ENCODE measurements at regions of chr3 and their contacts with region 1.

Region 1: GRCh38 chr3:32384938-32385337 is 6.7 kb upstream of the CMTM7 start:
- DNase-seq: no peak
- H3K4me3 ChIP-seq: no peak overlapping the region
- H3K27ac ChIP-seq: no peak overlapping the region
- H3K4me1 ChIP-seq: no peaks in the 10 kb centered on the region
- H3K27me3 ChIP-seq: no peaks in the 10 kb centered on the region
- CTCF ChIP-seq: no peak
- POLR2A ChIP-seq: no peak

Region 2: DNA sequence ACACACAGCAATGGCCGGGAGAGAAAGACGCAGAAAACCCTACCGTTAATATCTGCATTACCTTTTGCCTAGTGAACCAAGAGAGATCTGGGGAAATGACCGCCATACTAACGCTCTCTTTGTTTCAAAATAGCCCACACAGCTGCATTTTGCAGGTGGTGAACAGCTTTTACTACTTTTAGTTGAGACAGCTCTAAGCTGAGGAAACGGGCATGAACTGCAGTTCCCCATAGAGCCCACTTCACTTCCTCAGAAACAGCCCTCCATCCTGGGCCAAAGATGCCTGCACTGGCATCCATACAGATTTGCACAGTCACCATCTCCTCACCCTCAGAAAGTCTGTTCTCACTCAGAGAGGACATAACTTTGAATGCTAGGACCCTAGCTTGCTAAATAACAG is 358.3 kb before region 1 on chr3:
- intact Hi-C with region 1: no loop called
- DNase-seq: no peak
- H3K4me3 ChIP-seq: no peak overlapping the region
- H3K27ac ChIP-seq: no peak overlapping the region
- H3K4me1 ChIP-seq: no peaks in the 10 kb centered on the region
- H3K27me3 ChIP-seq: no peaks in the 10 kb centered on the region
- CTCF ChIP-seq: no peak
- POLR2A ChIP-seq: no peak

Region 3: GRCh38 chr3:32919920-32920319 is 535.0 kb after region 1 on chr3:
- intact Hi-C with region 1: loop called (anchors 5 kb)
- DNase-seq: no peak
- H3K4me3 ChIP-seq: no peak overlapping the region
- H3K27ac ChIP-seq: no peak overlapping the region
- H3K4me1 ChIP-seq: no peaks in the 10 kb centered on the region
- H3K27me3 ChIP-seq: no peaks in the 10 kb centered on the region
- CTCF ChIP-seq: no peak
- POLR2A ChIP-seq: no peak